H1 (cell line): ENCODE measurements at regions of chr7 and their contacts with region 1.

Region 1: GRCh38 chr7:16801111-16801542 is 3.7 kb downstream of the AGR2 start:
- DNase-seq: no peak
- H3K4me3 ChIP-seq: no peak overlapping the region
- H3K27ac ChIP-seq: no peak overlapping the region
- H3K4me1 ChIP-seq: no peaks in the 10 kb centered on the region
- H3K27me3 ChIP-seq: no peaks in the 10 kb centered on the region
- CTCF ChIP-seq: peak in 2 of 3 experiments; percentile 25 to 47; a peak in 2 of 4 replicates
- EP300 ChIP-seq: no peak
- POLR2A ChIP-seq: no peak
- RAD21 ChIP-seq: peak; percentile 53 to 56

Region 2: GRCh38 chr7:16779051-16779450 is 22.1 kb before region 1 on chr7:
- CTCF ChIA-PET with region 1: interaction called, 11 read pairs
- POLR2A ChIA-PET with region 1: no interaction called
- DNase-seq: no peak
- H3K4me3 ChIP-seq: no peak overlapping the region
- H3K27ac ChIP-seq: no peak overlapping the region
- H3K4me1 ChIP-seq: peaks cover 0 to 8% (median 4%) of the 10 kb centered on the region in 4 experiments; a peak in 3 of 7 replicates
- H3K27me3 ChIP-seq: no peaks in the 10 kb centered on the region
- CTCF ChIP-seq: no peak
- EP300 ChIP-seq: no peak
- POLR2A ChIP-seq: no peak
- RAD21 ChIP-seq: no peak

Region 3: GRCh38 chr7:16839646-16840045 is 38.5 kb after region 1 on chr7:
- CTCF ChIA-PET with region 1: interaction called, 11 read pairs
- POLR2A ChIA-PET with region 1: no interaction called
- DNase-seq: no peak
- H3K4me3 ChIP-seq: no peak overlapping the region
- H3K27ac ChIP-seq: no peak overlapping the region
- H3K4me1 ChIP-seq: no peaks in the 10 kb centered on the region
- H3K27me3 ChIP-seq: no peaks in the 10 kb centered on the region
- CTCF ChIP-seq: no peak
- EP300 ChIP-seq: no peak
- POLR2A ChIP-seq: no peak
- RAD21 ChIP-seq: no peak

Region 4: DNA sequence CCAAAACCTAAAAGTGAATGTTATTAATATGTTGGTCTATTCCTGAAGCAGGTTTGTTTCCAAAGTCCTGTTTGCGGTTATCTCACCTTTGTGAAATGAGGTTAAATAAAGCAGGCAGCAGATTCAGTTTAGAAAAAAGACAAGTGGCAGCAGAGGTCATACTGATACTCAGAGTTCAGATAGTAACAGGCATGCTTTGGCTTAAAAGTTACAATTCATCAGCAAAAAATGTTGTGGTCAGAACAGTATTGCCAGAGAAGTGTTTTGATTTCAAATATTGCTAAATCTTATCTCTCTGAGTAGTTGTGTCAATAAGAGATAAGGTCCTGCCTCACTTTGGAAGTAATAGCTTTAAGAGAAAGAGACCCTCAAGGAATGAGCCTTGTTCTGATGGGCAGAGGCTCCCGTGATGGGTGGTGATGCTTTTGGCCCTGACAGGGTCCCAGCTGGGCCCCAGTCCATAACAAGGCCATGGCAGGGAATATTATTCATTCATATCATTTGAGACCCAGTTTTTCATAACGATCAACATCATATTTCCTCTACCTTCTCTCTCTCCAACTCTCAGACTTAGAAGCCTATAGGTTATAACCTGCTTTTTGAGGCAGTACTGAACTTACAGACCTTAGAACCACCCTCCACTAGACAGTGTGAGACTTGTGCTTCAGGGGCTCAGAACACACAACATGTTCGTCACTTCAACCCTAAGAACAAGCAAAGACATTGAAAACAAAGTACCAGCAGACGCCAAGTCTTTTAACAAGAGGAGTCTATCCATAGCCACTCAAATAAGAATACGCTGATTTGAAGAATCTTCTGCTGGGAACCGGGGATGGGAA is 438.8 kb after region 1 on chr7:
- CTCF ChIA-PET with region 1: no interaction called
- POLR2A ChIA-PET with region 1: no interaction called
- DNase-seq: no peak
- H3K4me3 ChIP-seq: no peak overlapping the region
- H3K27ac ChIP-seq: no peak overlapping the region
- H3K4me1 ChIP-seq: no peaks in the 10 kb centered on the region
- H3K27me3 ChIP-seq: no peaks in the 10 kb centered on the region
- CTCF ChIP-seq: no peak
- EP300 ChIP-seq: no peak
- POLR2A ChIP-seq: no peak
- RAD21 ChIP-seq: no peak